GM23248 (cell line): ENCODE measurements at regions of chr10 and their contacts with region 1.

Region 1: GRCh38 chr10:112565434-112566053 is 118.5 kb downstream of the VTI1A start:
- DNase-seq: peak; percentile 81
- H3K4me3 ChIP-seq: no peak overlapping the region
- H3K27ac ChIP-seq: no peak overlapping the region
- H3K4me1 ChIP-seq: peaks cover 11% of the 10 kb centered on the region
- H3K27me3 ChIP-seq: no peaks in the 10 kb centered on the region

Region 2: DNA sequence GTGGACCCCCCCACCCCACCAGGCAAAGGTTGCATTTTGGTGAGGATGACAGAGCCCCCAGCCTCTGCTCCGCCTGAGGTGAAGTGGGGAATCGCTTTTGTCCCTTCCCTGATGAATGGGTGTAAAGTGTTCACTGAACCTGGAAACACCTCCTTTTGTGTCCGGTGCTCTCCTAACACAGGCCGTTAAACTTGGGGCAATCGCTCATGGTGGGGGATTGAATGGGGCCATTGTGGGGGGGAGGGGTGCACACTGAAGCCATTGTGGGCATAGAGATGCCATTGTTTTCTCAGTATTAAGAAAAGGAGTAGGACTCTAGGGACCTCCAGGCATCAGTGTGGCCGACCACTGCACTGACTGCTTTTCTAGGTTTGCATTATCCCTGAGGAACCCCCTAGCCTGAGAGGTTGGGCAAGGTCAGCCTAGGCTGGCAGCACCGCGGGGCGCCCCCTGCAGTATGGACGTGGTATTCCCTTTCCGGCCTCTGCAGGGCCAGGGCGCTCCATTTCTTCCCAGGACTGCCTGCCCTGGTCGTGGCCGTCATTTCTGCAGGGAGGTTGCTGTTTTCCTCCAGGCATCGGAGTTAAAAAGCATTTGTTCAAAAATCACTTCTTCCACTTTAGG is 542.8 kb after region 1 on chr10:
- in situ Hi-C with region 1: loop called (anchors 25 kb)
- DNase-seq: peak; percentile 25
- H3K4me3 ChIP-seq: no peak overlapping the region
- H3K27ac ChIP-seq: no peak overlapping the region
- H3K4me1 ChIP-seq: peaks cover 41% of the 10 kb centered on the region
- H3K27me3 ChIP-seq: no peaks in the 10 kb centered on the region

Region 3: DNA sequence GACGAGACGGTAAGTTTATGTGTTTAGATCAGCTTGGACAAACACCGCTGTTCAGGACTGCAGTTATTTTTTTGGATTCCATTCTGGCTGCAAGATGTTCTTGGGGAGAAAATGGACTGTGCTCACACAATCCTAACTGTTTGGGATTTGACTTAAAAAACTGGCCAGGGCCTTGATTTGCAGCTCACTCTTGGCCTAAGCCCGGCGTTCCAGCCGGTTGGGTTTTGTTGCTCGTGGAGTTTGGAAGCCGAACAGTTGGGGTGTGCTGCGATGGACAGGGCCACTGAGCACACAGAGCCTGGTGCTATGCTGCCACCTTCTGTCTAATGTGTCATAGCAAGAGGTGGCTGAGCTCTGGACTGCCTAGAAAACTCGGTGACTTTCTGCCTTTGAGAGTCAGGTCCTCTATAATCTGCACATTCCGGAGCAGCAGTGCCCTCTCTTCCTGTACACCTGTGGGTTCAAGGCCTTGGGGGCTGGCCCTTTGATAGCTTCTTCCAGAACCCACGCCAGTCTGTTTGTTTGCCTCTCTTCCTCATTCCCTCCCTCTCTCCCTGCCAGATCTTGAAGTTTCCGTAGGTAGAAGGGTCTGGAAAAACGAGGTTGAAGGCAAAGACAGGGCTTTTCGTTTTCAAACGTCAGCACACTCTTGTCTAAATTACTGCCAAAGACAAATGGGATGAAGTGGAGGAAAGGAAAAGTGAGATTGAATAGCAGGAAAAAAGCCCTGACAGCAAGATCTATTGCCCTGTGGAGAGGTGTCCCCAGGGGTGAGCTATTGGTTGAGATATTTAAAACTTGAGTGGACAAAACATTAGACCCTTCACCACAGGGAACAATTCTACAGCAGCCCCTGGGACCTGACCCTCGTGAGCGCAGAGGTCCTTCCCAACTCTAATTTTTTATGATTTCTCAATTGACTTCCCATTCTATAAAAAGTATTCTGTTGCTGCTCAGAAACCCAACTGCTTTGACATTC is 819.8 kb after region 1 on chr10:
- in situ Hi-C with region 1: loop called (anchors 25 kb)
- DNase-seq: peak; percentile 94
- H3K4me3 ChIP-seq: peak overlapping the region; percentile 62
- H3K27ac ChIP-seq: peak overlapping the region; percentile 7
- H3K4me1 ChIP-seq: peaks cover 51% of the 10 kb centered on the region
- H3K27me3 ChIP-seq: no peaks in the 10 kb centered on the region